A549 (cell line): ENCODE measurements at regions of chr20 and their contacts with region 1.

Region 1: DNA sequence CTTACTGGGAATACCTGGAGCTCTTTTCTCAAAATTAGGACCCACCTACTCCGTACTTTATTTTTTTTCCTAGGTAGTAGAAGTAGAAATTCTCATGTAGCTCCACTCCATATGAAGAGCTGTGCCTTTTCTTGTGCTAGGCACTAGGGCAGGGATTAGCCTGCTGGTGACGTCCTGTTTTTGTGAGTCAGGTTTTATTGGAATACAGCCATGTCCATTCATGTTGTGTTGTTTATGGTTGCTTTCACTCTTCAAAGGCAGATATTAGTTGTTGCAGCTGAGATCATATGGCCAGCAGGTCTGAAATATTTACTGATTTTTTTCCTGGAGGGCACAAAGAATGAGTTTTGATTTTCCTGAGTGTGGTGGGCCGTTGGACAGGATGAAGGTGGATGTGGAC is 20.5 kb downstream of the XRN2 start:
- DNase-seq: peak in 1 of 2 experiments; percentile 33
- ATAC-seq: peak in 1 of 2 experiments; percentile 56; a peak in 2 of 6 replicates
- H3K4me3 ChIP-seq: no peak overlapping the region
- H3K27ac ChIP-seq: no peak overlapping the region
- H3K4me1 ChIP-seq: peaks cover 17% of the 10 kb centered on the region
- CTCF ChIP-seq: no peak
- EP300 ChIP-seq: no peak
- POLR2A ChIP-seq: no peak
- RAD21 ChIP-seq: no peak

Region 2: DNA sequence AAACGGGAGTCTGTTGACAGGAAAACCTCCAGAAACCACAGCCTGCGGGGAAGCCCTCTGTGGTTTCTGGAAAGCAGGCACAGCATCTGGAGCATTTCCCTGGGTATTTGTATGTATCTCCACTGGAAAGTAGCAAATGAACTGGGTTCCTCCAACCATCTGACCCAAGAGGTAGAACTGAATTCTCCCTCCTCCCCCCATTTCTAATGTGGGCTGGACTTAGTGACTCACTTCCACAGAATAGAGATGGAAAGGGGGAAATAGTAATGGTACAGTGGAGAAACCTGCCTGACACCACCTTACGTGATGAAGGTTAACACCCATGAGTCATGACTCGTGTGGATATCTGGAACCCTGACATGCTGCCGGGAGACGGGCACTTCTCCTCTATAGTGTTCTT is 72.4 kb before region 1 on chr20:
- CTCF ChIA-PET with region 1: no interaction called
- POLR2A ChIA-PET with region 1: no interaction called
- DNase-seq: no peak
- ATAC-seq: no peak
- H3K4me3 ChIP-seq: no peak overlapping the region
- H3K27ac ChIP-seq: no peak overlapping the region
- H3K4me1 ChIP-seq: no peaks in the 10 kb centered on the region
- CTCF ChIP-seq: no peak
- EP300 ChIP-seq: no peak
- POLR2A ChIP-seq: no peak
- RAD21 ChIP-seq: no peak

Region 3: GRCh38 chr20:21303061-21303871 is 20.4 kb before region 1 on chr20 and contains the start of gene XRN2:
- CTCF ChIA-PET with region 1: no interaction called
- POLR2A ChIA-PET with region 1: interaction called, 14 read pairs
- DNase-seq: peak; percentile 85 to 97
- ATAC-seq: peak; percentile 97
- H3K4me3 ChIP-seq: peak within 1 kb of the TSS; percentile 95
- H3K27ac ChIP-seq: peak within 1 kb of the TSS; percentile 97 to 98
- H3K4me1 ChIP-seq: peaks cover 14% of the 10 kb centered on the region; the same call in 2 of the 3 replicates
- CTCF ChIP-seq: no peak
- EP300 ChIP-seq: no peak
- POLR2A ChIP-seq: peak; percentile 95
- RAD21 ChIP-seq: no peak
- polyA plus RNA-seq, gene XRN2: 151 and 192 TPM in 2 replicates